ENCODE measurements at regions of chr7 and their contacts with region 1.

Region 1: GRCh38 chr7:90540406-90540805 is 55.7 kb upstream of the CDK14 start:
- DNase-seq: no peak
- H3K4me3 ChIP-seq: no peak overlapping the region
- H3K27ac ChIP-seq: no peak overlapping the region
- H3K4me1 ChIP-seq: no peaks in the 10 kb centered on the region
- CTCF ChIP-seq: no peak

Region 2: DNA sequence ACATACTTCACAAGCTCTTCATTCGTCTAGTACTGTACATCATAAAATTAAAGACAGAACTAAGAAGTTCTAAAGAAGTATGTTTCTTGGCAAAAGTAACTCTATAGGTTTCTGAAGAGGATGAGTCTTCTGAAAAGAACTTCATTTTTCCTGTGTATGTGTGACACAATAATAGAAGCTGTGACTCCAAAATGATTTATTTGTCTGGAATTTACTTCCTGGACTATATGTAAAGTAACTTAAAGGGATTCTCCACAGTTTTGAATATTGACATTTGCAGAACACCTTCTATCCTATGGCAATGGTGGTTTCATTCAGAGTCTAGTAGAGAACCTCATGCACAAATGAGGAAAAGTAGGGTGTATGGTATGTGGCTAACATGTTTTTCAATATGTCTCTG is 157.0 kb before region 1 on chr7:
- CTCF ChIA-PET with region 1: no interaction called
- POLR2A ChIA-PET with region 1: no interaction called
- intact Hi-C with region 1: no loop called
- DNase-seq: no peak
- H3K4me3 ChIP-seq: no peak overlapping the region
- H3K27ac ChIP-seq: no peak overlapping the region
- H3K4me1 ChIP-seq: no peaks in the 10 kb centered on the region
- CTCF ChIP-seq: no peak

Region 3: DNA sequence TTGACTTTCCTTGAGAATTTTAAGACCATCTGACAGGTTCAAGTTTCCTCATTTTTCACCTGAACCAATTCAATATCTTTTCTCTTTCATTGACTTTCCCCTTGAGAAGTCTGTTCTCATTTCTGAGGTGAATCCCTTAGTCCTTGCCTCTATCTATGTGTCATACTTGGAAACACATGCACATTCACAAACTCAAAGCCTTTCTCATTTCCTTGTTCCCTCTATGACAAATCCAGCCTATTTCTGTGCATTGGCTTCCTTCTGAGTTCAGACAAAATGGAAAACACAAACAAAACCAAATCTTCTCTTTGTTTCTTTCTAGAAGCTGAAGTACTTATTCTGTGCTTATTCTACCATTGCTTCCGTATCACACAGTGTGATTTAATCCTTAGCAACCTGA is 57.2 kb before region 1 on chr7:
- CTCF ChIA-PET with region 1: no interaction called
- POLR2A ChIA-PET with region 1: no interaction called
- intact Hi-C with region 1: loop called (anchors 10 kb)
- DNase-seq: no peak
- H3K4me3 ChIP-seq: no peak overlapping the region
- H3K27ac ChIP-seq: no peak overlapping the region
- H3K4me1 ChIP-seq: no peaks in the 10 kb centered on the region
- CTCF ChIP-seq: no peak

Region 4: DNA sequence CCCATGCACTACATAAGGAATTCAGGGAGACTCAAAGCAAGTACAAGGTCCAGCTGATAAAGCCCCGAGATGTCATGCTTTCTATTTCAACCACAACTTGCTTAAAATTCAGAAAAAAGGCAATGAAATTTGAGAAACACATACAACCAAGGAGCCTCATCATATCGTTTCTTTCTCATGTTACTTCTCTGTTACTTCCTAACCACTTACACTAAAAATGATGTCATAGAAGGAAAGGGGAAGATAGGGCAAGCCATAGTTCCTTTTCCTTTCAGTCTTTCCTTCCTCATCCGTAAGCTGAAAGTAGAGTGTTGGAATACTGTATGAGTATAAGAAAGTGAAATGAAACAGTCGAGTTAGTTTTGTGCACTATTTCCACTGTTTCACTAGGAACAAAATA is 27.8 kb after region 1 on chr7:
- CTCF ChIA-PET with region 1: no interaction called
- POLR2A ChIA-PET with region 1: no interaction called
- intact Hi-C with region 1: no loop called
- DNase-seq: no peak
- H3K4me3 ChIP-seq: no peak overlapping the region
- H3K27ac ChIP-seq: no peak overlapping the region
- H3K4me1 ChIP-seq: peaks cover 8% of the 10 kb centered on the region
- CTCF ChIP-seq: no peak

Measured in OCI-LY7 (cell line).